Psoas muscle (tissue), 8 donors: ENCODE measurements at regions of chr7 and their contacts with region 1.

Region 1: GRCh38 chr7:108181073-108181985 is 51.2 kb upstream of the LAMB4 start:
- DNase-seq: no peak
- ATAC-seq: peak in 3 of 4 donors; percentile 42 to 60 (median 60)
- H3K4me3 ChIP-seq: no peak overlapping the region
- H3K27ac ChIP-seq: no peak overlapping the region
- H3K4me1 ChIP-seq: no peaks in the 10 kb centered on the region
- H3K27me3 ChIP-seq: no peaks in the 10 kb centered on the region
- CTCF ChIP-seq: peak; percentile 79

Region 2: DNA sequence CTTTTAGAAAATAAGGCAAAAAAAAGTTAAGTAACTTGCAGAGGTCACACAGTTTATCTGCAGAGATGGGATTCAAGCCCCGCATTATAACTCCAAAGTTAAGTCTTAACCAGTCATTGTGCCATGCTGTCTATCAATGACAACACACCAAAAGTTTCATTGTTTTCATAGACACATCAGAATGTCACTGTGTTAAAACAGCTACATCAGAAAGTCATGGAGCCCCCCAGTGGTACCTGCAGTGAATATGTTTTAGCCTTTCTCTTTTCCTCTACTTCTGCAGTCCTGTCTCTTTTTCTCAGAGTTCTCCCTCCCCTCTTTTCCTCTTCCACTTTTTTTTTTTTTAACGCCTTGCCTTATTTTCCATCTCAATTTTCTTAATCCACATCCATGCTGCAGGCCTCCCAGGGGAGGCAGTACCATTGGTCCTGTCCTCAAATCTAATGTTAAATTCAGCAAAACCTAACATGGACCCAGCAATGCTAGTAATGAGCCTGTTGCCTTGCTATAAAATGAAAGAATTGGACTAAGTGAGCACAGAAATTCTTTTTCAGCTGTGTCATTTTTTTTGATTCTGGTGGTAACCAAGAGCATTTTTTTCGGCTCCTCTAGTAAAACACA is 278.7 kb after region 1 on chr7:
- intact Hi-C with region 1: loop called in 1 of 2 experiments (anchors 10 kb)
- DNase-seq: no peak
- ATAC-seq: no peak
- H3K4me3 ChIP-seq: no peak overlapping the region
- H3K27ac ChIP-seq: no peak overlapping the region
- H3K4me1 ChIP-seq: peaks cover 5% of the 10 kb centered on the region
- H3K27me3 ChIP-seq: peaks cover 0 to 51% (median 9%) of the 10 kb centered on the region in 3 donors
- CTCF ChIP-seq: no peak

Region 3: GRCh38 chr7:108497082-108497725 is 315.9 kb after region 1 on chr7:
- intact Hi-C with region 1: loop called (anchors 2 to 10 kb)
- DNase-seq: no peak
- ATAC-seq: peak; percentile 37 to 79 (median 65)
- H3K4me3 ChIP-seq: no peak overlapping the region
- H3K27ac ChIP-seq: no peak overlapping the region
- H3K4me1 ChIP-seq: no peaks in the 10 kb centered on the region
- H3K27me3 ChIP-seq: no peaks in the 10 kb centered on the region
- CTCF ChIP-seq: peak; percentile 80